ENCODE measurements at regions of chr6 and their contacts with region 1.

Region 1: GRCh38 chr6:149235130-149235561 is 82.4 kb upstream of the TAB2 start:
- DNase-seq: no peak
- ATAC-seq: no peak
- H3K4me3 Mint-ChIP-seq: peak overlapping the region; percentile 59
- H3K27ac Mint-ChIP-seq: peak overlapping the region; percentile 94
- H3K4me1 Mint-ChIP-seq: peaks cover 51% of the 10 kb centered on the region
- H3K27me3 Mint-ChIP-seq: no peaks in the 10 kb centered on the region
- CTCF ChIP-seq: no peak

Region 2: GRCh38 chr6:149082286-149082707 is 152.8 kb before region 1 on chr6:
- CTCF ChIA-PET with region 1: interaction called, 4 read pairs
- POLR2A ChIA-PET with region 1: no interaction called
- intact Hi-C with region 1: loop called (anchors 5 kb)
- DNase-seq: peak; percentile 97
- ATAC-seq: peak; percentile 86
- H3K4me3 Mint-ChIP-seq: no peak overlapping the region
- H3K27ac Mint-ChIP-seq: no peak overlapping the region
- H3K4me1 Mint-ChIP-seq: peaks cover 50% of the 10 kb centered on the region
- H3K27me3 Mint-ChIP-seq: no peaks in the 10 kb centered on the region
- CTCF ChIP-seq: peak; percentile 81

Region 3: GRCh38 chr6:149271348-149272340 is 36.5 kb after region 1 on chr6:
- CTCF ChIA-PET with region 1: interaction called, 3 read pairs
- POLR2A ChIA-PET with region 1: interaction called, 3 read pairs
- intact Hi-C with region 1: loop called (anchors 5 kb)
- DNase-seq: peak; percentile 94
- ATAC-seq: peak; percentile 94
- H3K4me3 Mint-ChIP-seq: peak overlapping the region; percentile 43
- H3K27ac Mint-ChIP-seq: peak overlapping the region; percentile 93
- H3K4me1 Mint-ChIP-seq: peaks cover 38% of the 10 kb centered on the region
- H3K27me3 Mint-ChIP-seq: no peaks in the 10 kb centered on the region
- CTCF ChIP-seq: no peak

Measured in activated CD8-positive, alpha-beta T cell treated with anti-CD3 and anti-CD28 coated beads for 36 hours (primary cell).